Activated CD4-positive, alpha-beta T cell treated with anti-CD3 and anti-CD28 coated beads for 36 hours (primary cell): ENCODE measurements at regions of chr9 and their contacts with region 1.

Region 1: DNA sequence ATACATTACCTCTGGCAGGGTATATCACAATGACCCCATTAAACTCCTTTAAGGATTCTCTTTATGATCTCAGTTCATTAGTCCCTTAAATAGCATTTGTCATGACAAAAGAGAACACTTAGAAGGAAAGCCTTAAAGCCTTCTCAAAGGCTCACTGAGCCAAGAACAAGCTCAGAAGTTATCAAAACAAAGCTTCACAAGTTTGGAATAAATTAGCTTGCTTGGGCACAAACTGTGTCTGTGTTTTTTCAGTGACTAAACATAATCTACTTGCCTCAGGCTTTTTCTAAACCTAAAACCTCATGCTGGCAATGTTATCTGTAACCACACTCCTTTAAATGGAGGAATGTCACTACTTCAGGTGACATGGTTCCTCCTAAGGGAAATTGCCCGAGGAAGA is 1114.9 kb upstream of the C9orf72 start:
- DNase-seq: no peak
- ATAC-seq: no peak
- H3K4me3 Mint-ChIP-seq: no peak overlapping the region
- H3K27ac Mint-ChIP-seq: no peak overlapping the region
- H3K4me1 Mint-ChIP-seq: no peaks in the 10 kb centered on the region
- H3K27me3 Mint-ChIP-seq: no peaks in the 10 kb centered on the region

Region 2: GRCh38 chr9:28607843-28608242 is 80.3 kb before region 1 on chr9:
- CTCF ChIA-PET with region 1: no interaction called
- POLR2A ChIA-PET with region 1: no interaction called
- intact Hi-C with region 1: no loop called
- DNase-seq: no peak
- ATAC-seq: no peak
- H3K4me3 Mint-ChIP-seq: no peak overlapping the region
- H3K27ac Mint-ChIP-seq: no peak overlapping the region
- H3K4me1 Mint-ChIP-seq: no peaks in the 10 kb centered on the region
- H3K27me3 Mint-ChIP-seq: no peaks in the 10 kb centered on the region

Region 3: GRCh38 chr9:28648723-28649122 is 39.4 kb before region 1 on chr9:
- CTCF ChIA-PET with region 1: no interaction called
- POLR2A ChIA-PET with region 1: no interaction called
- intact Hi-C with region 1: no loop called
- DNase-seq: no peak
- ATAC-seq: no peak
- H3K4me3 Mint-ChIP-seq: no peak overlapping the region
- H3K27ac Mint-ChIP-seq: no peak overlapping the region
- H3K4me1 Mint-ChIP-seq: no peaks in the 10 kb centered on the region
- H3K27me3 Mint-ChIP-seq: no peaks in the 10 kb centered on the region

Region 4: DNA sequence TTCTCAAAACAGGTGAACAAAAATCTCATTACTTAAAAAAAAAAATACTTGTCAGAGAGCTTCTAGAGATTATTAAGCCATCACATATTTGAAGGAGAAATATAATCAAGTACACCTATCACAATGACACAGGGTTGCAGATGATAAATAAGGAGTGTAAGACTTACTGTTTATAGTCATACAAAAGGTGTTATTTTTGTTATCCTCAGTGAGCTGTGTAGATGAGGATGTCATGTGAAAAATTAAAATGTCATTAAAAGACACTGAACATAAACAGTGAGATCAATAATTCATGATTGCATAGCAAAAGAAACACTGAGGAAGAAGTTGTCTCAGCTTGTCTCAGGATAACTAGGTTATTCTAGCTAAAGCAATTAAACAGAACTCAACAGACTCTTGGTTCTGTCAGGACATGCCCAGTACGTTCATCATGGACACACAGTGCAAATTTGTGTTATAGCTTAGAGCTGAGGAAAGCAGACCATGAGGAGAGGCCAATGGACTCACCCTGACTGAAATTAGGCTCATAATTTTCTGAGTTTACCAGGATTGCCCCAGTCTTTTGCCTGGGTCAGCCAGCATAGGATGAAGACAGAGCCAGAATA is 47.7 kb after region 1 on chr9:
- CTCF ChIA-PET with region 1: no interaction called
- POLR2A ChIA-PET with region 1: no interaction called
- intact Hi-C with region 1: loop called in 1 of 2 experiments (anchors 5 kb)
- DNase-seq: no peak
- ATAC-seq: no peak
- H3K4me3 Mint-ChIP-seq: no peak overlapping the region
- H3K27ac Mint-ChIP-seq: no peak overlapping the region
- H3K4me1 Mint-ChIP-seq: no peaks in the 10 kb centered on the region
- H3K27me3 Mint-ChIP-seq: no peaks in the 10 kb centered on the region

Region 5: DNA sequence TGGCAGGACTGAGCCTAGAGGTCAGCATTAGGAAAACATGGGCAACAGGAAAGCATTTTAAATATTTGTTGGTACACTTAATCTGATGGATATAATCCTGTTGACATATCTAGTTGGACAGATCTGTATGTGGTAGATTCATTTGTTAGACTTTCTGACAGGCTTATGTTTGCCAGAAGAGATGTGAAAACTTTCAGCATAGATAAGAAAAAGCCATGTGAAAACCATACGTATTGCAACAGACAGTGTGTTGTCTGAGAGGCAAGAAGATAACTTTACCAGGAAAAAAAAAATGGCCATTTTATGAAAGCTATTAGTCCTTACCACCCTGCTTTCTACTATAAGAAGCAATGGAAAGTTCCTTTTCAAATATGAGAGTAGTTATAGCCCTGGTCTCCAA is 787.3 kb after region 1 on chr9:
- CTCF ChIA-PET with region 1: no interaction called
- POLR2A ChIA-PET with region 1: no interaction called
- intact Hi-C with region 1: no loop called
- DNase-seq: no peak
- ATAC-seq: no peak
- H3K4me3 Mint-ChIP-seq: no peak overlapping the region
- H3K27ac Mint-ChIP-seq: no peak overlapping the region
- H3K4me1 Mint-ChIP-seq: no peaks in the 10 kb centered on the region
- H3K27me3 Mint-ChIP-seq: no peaks in the 10 kb centered on the region